A673 (cell line): ENCODE measurements at regions of chr3 and their contacts with region 1.

Region 1: GRCh38 chr3:138834359-138835212 is at the start of gene PIK3CB:
- DNase-seq: peak; percentile 96
- H3K4me3 ChIP-seq: peak within 1 kb of the TSS; percentile 96
- H3K27ac ChIP-seq: peak within 1 kb of the TSS; percentile 86
- H3K4me1 ChIP-seq: peaks cover 6% of the 10 kb centered on the region
- H3K27me3 ChIP-seq: no peaks in the 10 kb centered on the region
- CTCF ChIP-seq: peak; percentile 36; the same call in 1 of the 2 replicates
- total RNA-seq, gene PIK3CB: 16.4 and 17.4 TPM in 2 replicates

Region 2: GRCh38 chr3:138284957-138285477 is 549.6 kb before region 1 on chr3:
- CTCF ChIA-PET with region 1: no interaction called
- POLR2A ChIA-PET with region 1: no interaction called
- intact Hi-C with region 1: no loop called
- DNase-seq: peak; percentile 4
- H3K4me3 ChIP-seq: no peak overlapping the region
- H3K27ac ChIP-seq: no peak overlapping the region
- H3K4me1 ChIP-seq: no peaks in the 10 kb centered on the region
- H3K27me3 ChIP-seq: no peaks in the 10 kb centered on the region
- CTCF ChIP-seq: 0 out of 2 replicates have a peak, but pooled peaks have one; percentile 19

Region 3: GRCh38 chr3:138493804-138494606 is 340.6 kb before region 1 on chr3:
- CTCF ChIA-PET with region 1: no interaction called
- POLR2A ChIA-PET with region 1: no interaction called
- intact Hi-C with region 1: no loop called
- DNase-seq: peak; percentile 57
- H3K4me3 ChIP-seq: no peak overlapping the region
- H3K27ac ChIP-seq: no peak overlapping the region
- H3K4me1 ChIP-seq: no peaks in the 10 kb centered on the region
- H3K27me3 ChIP-seq: no peaks in the 10 kb centered on the region
- CTCF ChIP-seq: no peak

Region 4: DNA sequence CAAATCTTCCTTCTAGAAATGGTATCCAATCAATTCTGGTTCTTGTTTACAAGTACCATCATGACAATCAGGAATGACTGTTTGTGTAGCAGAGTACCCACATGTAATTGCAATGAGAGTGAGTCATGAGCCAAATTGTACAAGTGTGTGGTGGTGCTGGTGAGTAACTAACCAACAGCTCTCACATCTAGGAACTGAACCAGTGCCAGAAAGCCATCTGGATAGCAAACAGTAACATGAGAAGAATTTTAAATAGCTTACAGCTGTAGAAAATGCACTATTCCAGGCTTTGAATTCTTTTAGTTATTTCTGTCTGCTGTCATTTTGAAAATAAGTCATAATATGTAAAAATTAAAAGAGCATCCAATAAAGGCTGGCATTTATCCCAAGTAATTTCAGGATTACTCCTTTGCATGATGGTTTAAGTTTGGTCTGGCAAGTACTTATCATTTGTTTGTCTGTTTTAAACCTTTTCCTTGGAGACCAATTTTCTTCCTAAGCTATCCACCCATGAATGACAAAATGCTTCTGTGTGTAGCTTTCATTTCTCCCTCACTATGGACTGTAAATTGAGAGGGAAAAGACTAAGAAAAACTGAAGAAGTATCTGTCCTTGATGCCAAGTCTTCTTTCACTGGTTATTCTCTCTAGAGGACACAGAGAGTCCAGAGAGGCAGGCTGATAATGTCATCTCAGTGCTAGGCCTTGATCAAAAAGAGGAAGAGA is 59.9 kb before region 1 on chr3:
- CTCF ChIA-PET with region 1: no interaction called
- POLR2A ChIA-PET with region 1: no interaction called
- intact Hi-C with region 1: loop called (anchors 5 kb)
- DNase-seq: peak; percentile 94
- H3K4me3 ChIP-seq: no peak overlapping the region
- H3K27ac ChIP-seq: peak overlapping the region; percentile 57
- H3K4me1 ChIP-seq: peaks cover 22% of the 10 kb centered on the region
- H3K27me3 ChIP-seq: no peaks in the 10 kb centered on the region
- CTCF ChIP-seq: 0 out of 2 replicates have a peak, but pooled peaks have one; percentile 29